MCF 10A (cell line): ENCODE measurements at regions of chr16 and their contacts with region 1.

Region 1: GRCh38 chr16:87806603-87807546 is 41.1 kb upstream of the KLHDC4 start:
- DNase-seq: peak; percentile 99
- H3K4me3 Mint-ChIP-seq: peak overlapping the region; percentile 87
- H3K27ac Mint-ChIP-seq: peak overlapping the region; percentile 96
- H3K4me1 Mint-ChIP-seq: peaks cover 37% of the 10 kb centered on the region
- H3K27me3 Mint-ChIP-seq: no peaks in the 10 kb centered on the region
- CTCF ChIP-seq: no peak

Region 2: GRCh38 chr16:87681981-87682570 is 124.8 kb before region 1 on chr16:
- CTCF ChIA-PET with region 1: no interaction called
- POLR2A ChIA-PET with region 1: no interaction called
- intact Hi-C with region 1: no loop called
- DNase-seq: peak; percentile 27
- H3K4me3 Mint-ChIP-seq: no peak overlapping the region
- H3K27ac Mint-ChIP-seq: no peak overlapping the region
- H3K4me1 Mint-ChIP-seq: no peaks in the 10 kb centered on the region
- H3K27me3 Mint-ChIP-seq: peaks cover 24% of the 10 kb centered on the region
- CTCF ChIP-seq: no peak

Region 3: DNA sequence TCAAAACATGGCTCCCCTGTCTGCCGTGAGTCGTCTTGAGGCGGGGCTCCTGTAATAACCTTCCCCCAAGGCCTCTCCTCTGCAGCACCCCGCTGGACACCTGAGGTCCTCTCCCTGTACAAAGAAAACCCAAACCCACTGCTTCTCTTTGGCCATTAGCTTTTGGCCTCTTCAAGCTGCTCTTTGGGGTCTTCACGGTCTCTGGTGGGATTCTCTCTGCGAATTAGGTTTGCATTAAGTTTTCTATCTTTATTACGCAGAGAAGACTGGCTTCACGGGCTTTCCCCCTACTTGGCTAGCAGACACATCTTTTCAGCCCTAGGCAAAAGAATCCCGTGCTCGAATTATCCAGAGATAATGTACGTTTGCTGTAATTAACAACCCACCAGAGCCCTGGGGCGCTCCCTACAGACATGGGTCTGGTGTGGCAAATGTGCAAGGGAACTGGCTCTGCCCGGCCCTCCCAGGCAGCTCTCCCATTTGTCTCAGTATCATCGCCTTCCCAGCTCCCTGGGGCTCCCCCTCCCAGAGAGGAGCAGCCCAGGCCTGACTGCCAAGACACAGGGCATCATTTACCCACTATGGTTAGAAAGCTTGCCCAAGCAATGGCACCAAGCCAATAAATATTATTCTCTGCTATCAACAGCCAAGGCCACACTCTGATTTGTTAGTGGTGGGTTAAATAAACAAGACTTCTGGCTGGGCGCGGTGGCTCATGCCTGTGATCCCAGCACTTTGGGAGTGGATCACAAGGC is 16.4 kb before region 1 on chr16:
- CTCF ChIA-PET with region 1: interaction called, 75 read pairs
- POLR2A ChIA-PET with region 1: interaction called, 349 read pairs
- intact Hi-C with region 1: loop called (anchors 1 kb)
- DNase-seq: peak; percentile 98
- H3K4me3 Mint-ChIP-seq: peak overlapping the region; percentile 17
- H3K27ac Mint-ChIP-seq: peak overlapping the region; percentile 93
- H3K4me1 Mint-ChIP-seq: peaks cover 25% of the 10 kb centered on the region
- H3K27me3 Mint-ChIP-seq: no peaks in the 10 kb centered on the region
- CTCF ChIP-seq: no peak

Region 4: GRCh38 chr16:87828071-87828971 is 21.4 kb after region 1 on chr16:
- CTCF ChIA-PET with region 1: interaction called, 3 read pairs
- POLR2A ChIA-PET with region 1: interaction called, 65 read pairs
- intact Hi-C with region 1: no loop called
- DNase-seq: peak; percentile 61
- H3K4me3 Mint-ChIP-seq: no peak overlapping the region
- H3K27ac Mint-ChIP-seq: no peak overlapping the region
- H3K4me1 Mint-ChIP-seq: peaks cover 8% of the 10 kb centered on the region
- H3K27me3 Mint-ChIP-seq: no peaks in the 10 kb centered on the region
- CTCF ChIP-seq: no peak

Region 5: GRCh38 chr16:87853411-87854052 is 46.7 kb after region 1 on chr16:
- CTCF ChIA-PET with region 1: interaction called, 5 read pairs
- POLR2A ChIA-PET with region 1: interaction called, 25 read pairs
- intact Hi-C with region 1: loop called (anchors 5 kb)
- DNase-seq: peak; percentile 96
- H3K4me3 Mint-ChIP-seq: peak overlapping the region; percentile 52
- H3K27ac Mint-ChIP-seq: peak overlapping the region; percentile 83
- H3K4me1 Mint-ChIP-seq: peaks cover 36% of the 10 kb centered on the region
- H3K27me3 Mint-ChIP-seq: no peaks in the 10 kb centered on the region
- CTCF ChIP-seq: no peak